ENCODE measurements at regions of chr17 and their contacts with region 1.

Region 1: DNA sequence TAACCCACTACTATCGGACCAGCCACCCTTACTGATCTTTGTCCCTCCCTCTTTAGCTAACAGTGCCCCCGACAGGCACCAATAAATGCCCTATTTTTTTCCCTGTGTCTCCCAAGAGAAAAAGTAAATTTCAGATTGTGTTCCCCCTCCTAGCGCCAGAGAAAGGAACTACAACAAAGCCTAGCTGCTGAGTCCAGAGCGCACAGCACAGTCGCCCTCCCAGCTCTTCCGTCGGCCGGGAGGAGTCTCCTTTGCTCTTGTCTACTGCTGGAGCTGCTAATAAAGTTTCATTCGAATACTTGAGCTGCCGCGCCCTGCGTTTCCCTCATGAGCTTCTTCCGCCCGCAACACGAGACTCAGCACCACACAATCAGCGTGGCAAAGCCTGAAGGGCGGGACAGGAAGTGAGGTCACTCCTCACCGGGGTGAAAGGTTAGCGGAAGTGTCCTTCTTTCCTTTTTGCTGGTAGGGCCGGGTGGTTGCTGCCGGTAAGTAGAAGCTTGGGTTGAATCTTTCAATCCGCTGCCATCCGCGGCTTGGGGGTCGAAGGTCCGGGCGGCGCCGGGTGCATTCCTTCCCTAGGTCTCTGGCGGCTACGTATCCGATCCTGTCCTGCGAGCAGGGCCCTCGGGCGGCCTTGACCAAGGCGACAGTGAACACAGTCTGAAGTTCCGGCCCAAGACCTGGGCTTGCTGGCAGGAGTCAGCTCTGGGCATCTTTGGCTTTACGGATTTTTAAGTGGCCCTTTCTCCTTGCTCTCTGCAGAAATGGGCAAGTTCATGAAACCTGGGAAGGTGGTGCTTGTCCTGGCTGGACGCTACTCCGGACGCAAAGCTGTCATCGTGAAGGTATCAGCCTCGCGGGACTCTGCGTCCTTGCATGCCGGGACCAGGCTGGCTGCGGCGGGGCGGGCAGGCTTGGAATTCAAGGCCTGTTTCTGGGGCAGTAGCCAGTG is at the start of gene RPL27:
- DNase-seq: peak; percentile 99
- ATAC-seq: peak; percentile 94
- H3K4me3 ChIP-seq: peak within 1 kb of the TSS; percentile 70 to 94 (median 84)
- H3K4me3 Mint-ChIP-seq: peak within 1 kb of the TSS; percentile 96
- H3K27ac ChIP-seq: peak within 1 kb of the TSS; percentile 89 to 96
- H3K27ac Mint-ChIP-seq: peak within 1 kb of the TSS; percentile 88
- H3K4me1 ChIP-seq: peaks cover 20 to 22% of the 10 kb centered on the region in 2 donors
- H3K4me1 Mint-ChIP-seq: peaks cover 37% of the 10 kb centered on the region
- H3K27me3 ChIP-seq: no peaks in the 10 kb centered on the region
- H3K27me3 Mint-ChIP-seq: no peaks in the 10 kb centered on the region
- CTCF ChIP-seq: peak; percentile 89
- total RNA-seq, gene RPL27: 925 and 1,087 TPM in 2 replicates

Region 2: DNA sequence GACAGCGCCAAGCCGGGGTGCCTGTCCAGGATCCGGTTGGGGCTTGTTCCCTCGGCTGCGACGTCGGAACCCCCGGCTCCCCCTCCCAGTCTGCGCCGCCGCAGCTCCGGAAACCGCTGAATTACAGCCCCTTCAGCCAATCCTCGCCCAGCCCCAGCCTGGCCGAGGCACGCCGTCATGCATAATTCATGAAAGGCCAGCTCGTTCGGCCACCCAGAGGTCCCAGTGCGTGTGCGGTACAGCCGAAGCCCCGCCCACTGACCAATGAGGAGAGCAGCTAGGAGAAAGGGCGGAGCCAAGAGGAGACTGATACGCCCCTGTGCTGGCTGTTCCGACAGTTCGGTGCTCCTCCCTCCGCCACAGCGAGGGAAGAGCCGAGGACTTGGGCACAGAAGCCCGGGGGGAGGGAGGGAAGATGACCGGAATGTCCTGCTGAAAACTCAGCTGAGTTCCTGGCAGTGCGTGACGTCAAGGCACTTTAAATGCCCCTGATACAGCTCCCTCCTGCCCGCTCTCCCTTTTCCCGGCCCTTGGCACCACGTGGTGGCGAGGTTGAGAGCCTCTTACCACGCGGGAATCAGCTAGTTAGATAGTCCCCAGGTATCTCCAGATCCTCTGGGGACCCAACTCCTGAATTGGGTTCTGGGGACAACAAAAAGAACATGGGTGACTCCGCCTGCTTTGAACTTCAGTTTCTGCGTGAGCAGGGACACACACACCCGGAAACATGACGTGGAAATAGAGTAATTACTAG is 609.7 kb before region 1 on chr17 and contains the start of gene STAT3:
- CTCF ChIA-PET with region 1: no interaction called
- POLR2A ChIA-PET with region 1: no interaction called
- intact Hi-C with region 1: loop called (anchors 5 kb)
- DNase-seq: peak; percentile 100
- ATAC-seq: peak; percentile 89
- H3K4me3 ChIP-seq: peak within 1 kb of the TSS; percentile 67 to 97 (median 91)
- H3K4me3 Mint-ChIP-seq: peak within 1 kb of the TSS; percentile 98
- H3K27ac ChIP-seq: peak within 1 kb of the TSS; percentile 97
- H3K27ac Mint-ChIP-seq: peak within 1 kb of the TSS; percentile 99
- H3K4me1 ChIP-seq: peaks cover 19 to 34% of the 10 kb centered on the region in 2 donors
- H3K4me1 Mint-ChIP-seq: peaks cover 51% of the 10 kb centered on the region
- H3K27me3 ChIP-seq: no peaks in the 10 kb centered on the region
- H3K27me3 Mint-ChIP-seq: no peaks in the 10 kb centered on the region
- CTCF ChIP-seq: no peak
- total RNA-seq, gene STAT3: 140 and 151 TPM in 2 replicates

Region 3: DNA sequence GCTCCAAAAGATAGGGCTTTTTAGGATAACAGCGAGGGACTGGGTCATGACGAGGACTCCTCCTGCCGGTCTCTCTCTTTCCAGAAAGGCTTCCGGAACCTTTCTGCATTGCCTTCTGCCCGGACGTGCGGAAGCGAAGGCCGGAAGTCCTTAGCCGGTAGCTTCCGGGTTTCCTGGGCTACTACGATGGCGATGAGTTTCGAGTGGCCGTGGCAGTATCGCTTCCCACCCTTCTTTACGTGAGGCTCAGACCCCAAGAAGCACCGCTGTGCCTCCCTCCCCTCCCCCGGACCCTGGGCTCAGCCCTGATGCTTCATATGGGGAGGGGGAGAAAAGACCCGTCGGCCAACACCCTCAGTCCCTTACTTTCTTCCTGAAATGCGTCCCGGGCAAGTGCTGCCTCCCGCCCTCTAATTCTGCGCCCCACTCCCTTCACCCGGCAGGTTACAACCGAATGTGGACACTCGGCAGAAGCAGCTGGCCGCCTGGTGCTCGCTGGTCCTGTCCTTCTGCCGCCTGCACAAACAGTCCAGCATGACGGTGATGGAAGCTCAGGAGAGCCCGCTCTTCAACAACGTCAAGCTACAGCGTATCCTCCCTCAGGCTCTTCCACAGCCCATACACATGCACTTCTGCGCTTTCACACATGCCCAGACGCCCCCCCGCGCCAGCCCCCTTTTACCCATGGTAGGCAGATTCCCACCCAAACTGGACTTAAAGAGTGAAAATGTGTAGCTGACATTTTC is 224.8 kb before region 1 on chr17 and contains the start of gene VPS25:
- CTCF ChIA-PET with region 1: no interaction called
- POLR2A ChIA-PET with region 1: no interaction called
- intact Hi-C with region 1: loop called (anchors 1 kb)
- DNase-seq: peak; percentile 87
- ATAC-seq: peak; percentile 89
- H3K4me3 ChIP-seq: peak within 1 kb of the TSS; percentile 71 to 88 (median 82)
- H3K4me3 Mint-ChIP-seq: peak within 1 kb of the TSS; percentile 99
- H3K27ac ChIP-seq: peak within 1 kb of the TSS; percentile 81 to 85
- H3K27ac Mint-ChIP-seq: peak within 1 kb of the TSS; percentile 98
- H3K4me1 ChIP-seq: peaks cover 16 to 17% of the 10 kb centered on the region in 2 donors
- H3K4me1 Mint-ChIP-seq: peaks cover 23% of the 10 kb centered on the region
- H3K27me3 ChIP-seq: no peaks in the 10 kb centered on the region
- H3K27me3 Mint-ChIP-seq: no peaks in the 10 kb centered on the region
- CTCF ChIP-seq: no peak
- total RNA-seq, gene VPS25: 38.7 and 38.8 TPM in 2 replicates

Region 4: DNA sequence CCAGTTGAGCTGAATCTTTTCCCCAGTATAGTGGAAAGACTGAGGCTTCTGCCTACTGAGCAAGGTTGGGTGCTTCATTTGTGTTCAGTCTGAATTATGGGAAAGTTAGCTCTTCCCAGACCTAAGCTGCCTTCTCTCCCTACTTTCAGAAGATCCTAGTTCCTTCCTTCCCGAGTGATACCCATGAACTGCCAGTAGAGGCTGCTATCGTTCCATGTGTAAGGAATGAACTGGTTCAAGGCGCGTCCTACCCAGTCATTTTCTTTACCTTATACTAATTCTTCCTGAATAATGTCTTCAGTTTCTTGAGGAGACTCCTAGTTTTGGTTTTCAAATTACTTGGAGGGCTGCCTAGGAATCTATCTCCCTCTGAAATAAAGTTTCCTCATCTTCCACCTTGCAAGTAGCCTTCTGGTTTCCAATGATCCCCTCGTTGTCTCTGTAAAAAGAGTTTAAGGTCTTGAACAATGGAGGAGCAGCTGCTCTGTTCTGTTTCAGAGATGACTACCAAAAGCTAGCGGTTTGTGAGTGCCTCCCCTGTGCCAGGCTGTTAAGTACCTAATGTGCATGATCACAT is 154.8 kb before region 1 on chr17:
- CTCF ChIA-PET with region 1: interaction called, 30 read pairs
- POLR2A ChIA-PET with region 1: interaction called, 4 read pairs
- intact Hi-C with region 1: loop called (anchors 1 kb)
- DNase-seq: peak; percentile 60
- ATAC-seq: peak; percentile 49
- H3K4me3 ChIP-seq: no peak overlapping the region
- H3K4me3 Mint-ChIP-seq: no peak overlapping the region
- H3K27ac ChIP-seq: no peak overlapping the region
- H3K27ac Mint-ChIP-seq: no peak overlapping the region
- H3K4me1 ChIP-seq: no peaks in the 10 kb centered on the region
- H3K4me1 Mint-ChIP-seq: no peaks in the 10 kb centered on the region
- H3K27me3 ChIP-seq: no peaks in the 10 kb centered on the region
- H3K27me3 Mint-ChIP-seq: no peaks in the 10 kb centered on the region
- CTCF ChIP-seq: peak; percentile 67

Region 5: GRCh38 chr17:43024407-43025289 is 26.4 kb after region 1 on chr17 and contains the start of gene RND2:
- CTCF ChIA-PET with region 1: interaction called, 9 read pairs
- POLR2A ChIA-PET with region 1: interaction called, 20 read pairs
- intact Hi-C with region 1: loop called (anchors 1 kb)
- DNase-seq: peak; percentile 92
- ATAC-seq: peak; percentile 71
- H3K4me3 ChIP-seq: peak within 1 kb of the TSS; percentile 49 to 77 (median 68)
- H3K4me3 Mint-ChIP-seq: peak within 1 kb of the TSS; percentile 88
- H3K27ac ChIP-seq: peak within 1 kb of the TSS in 1 of 2 donors; percentile 63
- H3K27ac Mint-ChIP-seq: peak within 1 kb of the TSS; percentile 87
- H3K4me1 ChIP-seq: peaks cover 9 to 31% of the 10 kb centered on the region in 2 donors
- H3K4me1 Mint-ChIP-seq: peaks cover 29% of the 10 kb centered on the region
- H3K27me3 ChIP-seq: no peaks in the 10 kb centered on the region
- H3K27me3 Mint-ChIP-seq: no peaks in the 10 kb centered on the region
- CTCF ChIP-seq: peak; percentile 62
- total RNA-seq, gene RND2: 0.44 and 1.2 TPM in 2 replicates

Region 6: GRCh38 chr17:43211480-43212402 is 213.5 kb after region 1 on chr17 and contains the start of gene TMEM106A:
- CTCF ChIA-PET with region 1: interaction called, 6 read pairs
- POLR2A ChIA-PET with region 1: interaction called, 4 read pairs
- intact Hi-C with region 1: loop called (anchors 2 kb)
- DNase-seq: peak; percentile 90
- ATAC-seq: peak; percentile 88
- H3K4me3 ChIP-seq: peak within 1 kb of the TSS; percentile 71 to 92 (median 83)
- H3K4me3 Mint-ChIP-seq: peak within 1 kb of the TSS; percentile 99
- H3K27ac ChIP-seq: peak within 1 kb of the TSS; percentile 79 to 88
- H3K27ac Mint-ChIP-seq: peak within 1 kb of the TSS; percentile 98
- H3K4me1 ChIP-seq: peaks cover 21 to 27% of the 10 kb centered on the region in 2 donors
- H3K4me1 Mint-ChIP-seq: peaks cover 35% of the 10 kb centered on the region
- H3K27me3 ChIP-seq: no peaks in the 10 kb centered on the region
- H3K27me3 Mint-ChIP-seq: no peaks in the 10 kb centered on the region
- CTCF ChIP-seq: peak; percentile 62
- total RNA-seq, gene TMEM106A: 66.0 and 66.3 TPM in 2 replicates

Region 7: DNA sequence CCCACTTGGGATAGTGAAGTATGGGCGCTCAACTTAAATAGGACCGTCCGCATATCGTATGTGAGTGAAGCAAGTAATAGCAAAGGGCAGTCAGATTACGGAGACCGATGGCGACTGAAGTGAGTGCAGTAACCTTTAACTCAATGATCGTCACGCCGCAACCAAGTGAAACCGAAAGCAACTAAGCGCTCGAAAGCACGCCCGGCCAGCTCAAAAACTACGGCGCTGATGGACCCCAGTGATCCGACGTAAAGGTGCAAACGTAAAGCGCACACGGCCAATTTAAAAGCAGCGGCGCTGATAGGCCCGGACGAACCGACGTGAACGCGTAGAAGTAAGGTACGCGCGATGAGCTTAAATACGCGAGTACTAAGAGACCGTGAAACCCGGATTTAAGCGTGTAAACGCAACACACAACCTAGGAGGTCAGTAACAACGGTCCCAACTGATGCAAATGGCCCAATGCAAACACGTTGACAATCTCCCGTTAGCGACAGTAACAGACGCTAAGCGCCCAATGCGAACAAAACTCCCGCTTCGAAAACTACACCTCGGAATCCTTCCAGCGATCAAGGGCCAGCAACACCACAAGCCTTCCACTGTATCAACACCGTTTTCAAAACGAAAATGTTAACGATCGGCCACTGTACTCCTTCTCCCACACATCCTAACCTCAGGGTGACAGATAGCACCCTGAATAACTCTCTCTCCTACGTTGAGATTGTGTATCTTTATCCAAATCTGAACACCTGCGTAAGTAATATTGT is 362.7 kb after region 1 on chr17:
- CTCF ChIA-PET with region 1: no interaction called
- POLR2A ChIA-PET with region 1: interaction called, 13 read pairs
- intact Hi-C with region 1: no loop called
- DNase-seq: peak; percentile 94
- ATAC-seq: peak; percentile 80
- H3K4me3 ChIP-seq: peak overlapping the region; percentile 61 to 88 (median 70)
- H3K4me3 Mint-ChIP-seq: peak overlapping the region; percentile 96
- H3K27ac ChIP-seq: peak overlapping the region; percentile 97 to 99
- H3K27ac Mint-ChIP-seq: peak overlapping the region; percentile 100
- H3K4me1 ChIP-seq: peaks cover 9 to 15% of the 10 kb centered on the region in 2 donors
- H3K4me1 Mint-ChIP-seq: peaks cover 21% of the 10 kb centered on the region
- H3K27me3 ChIP-seq: no peaks in the 10 kb centered on the region
- H3K27me3 Mint-ChIP-seq: no peaks in the 10 kb centered on the region
- CTCF ChIP-seq: no peak

Measured in B cell (primary cell).